Breast epithelium (tissue), 4 donors: ENCODE measurements at regions of chr17 and their contacts with region 1.

Region 1: GRCh38 chr17:55962951-55963401 is 190.3 kb upstream of the ANKFN1 start:
- DNase-seq: peak in 1 of 2 donors; percentile 21
- H3K4me3 ChIP-seq: no peak overlapping the region
- H3K27ac ChIP-seq: no peak overlapping the region
- H3K4me1 ChIP-seq: no peaks in the 10 kb centered on the region
- H3K27me3 ChIP-seq: no peaks in the 10 kb centered on the region
- CTCF ChIP-seq: no peak
- POLR2A ChIP-seq: no peak

Region 2: DNA sequence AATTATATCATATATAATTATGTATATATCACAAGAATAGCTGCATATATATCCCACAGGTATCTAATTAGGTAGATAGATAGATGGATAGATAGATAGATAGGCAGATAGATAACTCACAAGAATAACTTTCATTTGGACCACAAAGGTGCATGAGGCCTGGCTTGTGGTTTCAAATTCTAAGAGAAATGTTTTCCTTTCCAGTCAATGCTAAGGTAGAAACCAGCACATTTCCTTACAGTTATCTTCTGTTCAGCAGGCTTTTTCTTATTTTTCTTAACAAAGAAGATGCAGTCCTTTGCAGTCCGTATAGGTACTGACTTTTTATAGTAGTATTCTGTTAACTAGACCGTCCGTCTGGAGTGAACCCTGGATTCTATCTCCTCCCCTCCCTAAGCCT is 37.4 kb after region 1 on chr17:
- intact Hi-C with region 1: no loop called
- DNase-seq: no peak
- H3K4me3 ChIP-seq: no peak overlapping the region
- H3K27ac ChIP-seq: no peak overlapping the region
- H3K4me1 ChIP-seq: no peaks in the 10 kb centered on the region
- H3K27me3 ChIP-seq: no peaks in the 10 kb centered on the region
- CTCF ChIP-seq: no peak
- POLR2A ChIP-seq: no peak

Region 3: DNA sequence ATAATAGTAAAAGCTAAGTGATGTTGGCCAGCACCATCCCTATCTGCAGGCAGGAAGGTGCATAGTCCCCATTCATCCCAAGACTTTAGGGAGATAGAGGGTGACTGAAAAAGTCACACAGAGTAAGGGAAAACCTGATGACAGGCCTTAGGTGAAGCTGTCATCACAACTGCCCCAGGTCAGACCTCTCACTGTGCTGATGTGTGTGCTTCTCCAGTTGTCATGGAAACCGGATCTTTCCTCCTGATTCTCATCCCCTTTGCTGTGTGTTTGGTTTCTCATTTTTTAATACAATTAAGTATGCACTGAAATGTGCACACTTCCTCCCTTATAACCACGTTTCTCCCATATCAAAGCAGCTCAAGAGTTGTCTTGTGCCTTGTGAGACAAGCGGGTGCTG is 55.2 kb after region 1 on chr17:
- intact Hi-C with region 1: no loop called
- DNase-seq: no peak
- H3K4me3 ChIP-seq: no peak overlapping the region
- H3K27ac ChIP-seq: no peak overlapping the region
- H3K4me1 ChIP-seq: no peaks in the 10 kb centered on the region
- H3K27me3 ChIP-seq: peaks cover 0 to 3% of the 10 kb centered on the region in 2 donors
- CTCF ChIP-seq: no peak
- POLR2A ChIP-seq: no peak

Region 4: GRCh38 chr17:56510554-56511342 is 547.8 kb after region 1 on chr17:
- intact Hi-C with region 1: loop called (anchors 5 kb)
- DNase-seq: no peak
- H3K4me3 ChIP-seq: no peak overlapping the region
- H3K27ac ChIP-seq: no peak overlapping the region
- H3K4me1 ChIP-seq: no peaks in the 10 kb centered on the region
- H3K27me3 ChIP-seq: no peaks in the 10 kb centered on the region
- CTCF ChIP-seq: no peak
- POLR2A ChIP-seq: no peak

Region 5: GRCh38 chr17:56616239-56616638 is 653.3 kb after region 1 on chr17:
- intact Hi-C with region 1: loop called (anchors 5 kb)
- DNase-seq: no peak
- H3K4me3 ChIP-seq: no peak overlapping the region
- H3K27ac ChIP-seq: no peak overlapping the region
- H3K4me1 ChIP-seq: no peaks in the 10 kb centered on the region
- H3K27me3 ChIP-seq: no peaks in the 10 kb centered on the region
- CTCF ChIP-seq: no peak
- POLR2A ChIP-seq: no peak